Posterior vena cava (tissue), 2 donors: ENCODE measurements at regions of chrX and their contacts with region 1.

Region 1: DNA sequence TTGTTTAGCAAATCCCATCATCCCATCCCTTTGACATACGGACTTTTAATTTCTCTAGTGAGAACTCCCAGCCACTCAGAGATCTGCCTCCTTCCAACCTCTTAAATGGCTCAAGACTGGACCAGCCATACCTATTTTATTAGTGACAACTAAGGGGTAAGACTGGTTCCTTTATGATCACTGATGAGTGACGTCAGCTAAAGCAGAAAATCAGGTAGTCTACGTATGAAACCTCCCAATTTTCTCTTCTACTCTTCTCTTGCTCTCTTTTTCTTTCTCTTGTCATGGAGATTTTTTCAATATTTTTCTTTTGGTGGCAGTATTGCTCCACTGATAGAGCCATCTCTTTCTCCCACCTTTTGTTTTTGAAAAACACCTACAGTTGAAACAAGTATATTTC is 265.0 kb downstream of the MAGEE1 start:
- DNase-seq: no peak

Region 2: GRCh38 chrX:78437621-78438020 is 1745.1 kb after region 1 on chrX:
- intact Hi-C with region 1: loop called in 1 of 2 experiments (anchors 5 kb)
- DNase-seq: no peak